Thyroid gland (tissue), 4 donors: ENCODE measurements at regions of chr9 and their contacts with region 1.

Region 1: DNA sequence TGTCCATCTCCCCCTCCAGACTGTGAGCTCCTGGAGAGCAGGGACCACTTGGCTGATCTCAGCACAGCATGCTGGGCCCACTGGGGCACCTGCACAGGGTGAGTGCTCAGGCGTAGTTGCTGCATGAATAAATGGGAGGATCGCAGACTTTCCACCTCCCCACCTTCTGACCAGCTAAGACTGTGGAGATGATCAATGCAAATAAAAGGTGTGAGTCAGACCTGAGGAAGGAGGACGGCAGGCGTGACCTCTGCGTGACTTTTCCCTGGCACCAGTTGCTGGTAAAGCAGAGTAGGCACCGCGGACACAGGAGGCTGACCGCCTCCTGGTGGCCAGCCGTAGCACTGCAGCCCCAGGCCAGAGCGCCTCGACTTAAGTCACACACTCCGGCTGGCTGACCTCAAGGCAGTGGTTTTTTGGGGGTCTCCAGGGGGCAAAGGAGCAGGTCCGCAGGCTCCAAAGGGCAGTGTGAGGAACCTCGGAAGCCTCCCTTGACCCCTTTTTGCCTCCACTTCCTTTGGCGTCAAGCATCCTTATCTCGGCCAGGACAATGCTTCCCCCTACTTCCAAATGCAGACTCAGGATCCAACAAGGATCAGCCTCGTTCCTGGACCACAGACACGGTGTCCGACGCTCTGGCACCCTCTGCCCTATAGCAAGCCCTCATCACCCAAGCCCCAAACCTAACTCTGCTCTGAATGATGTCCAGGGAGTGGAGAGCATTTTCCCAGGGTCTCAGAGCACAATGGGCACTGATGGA is 12.7 kb upstream of the TDRD7 start:
- DNase-seq: peak; percentile 83 to 88
- H3K4me3 ChIP-seq: no peak overlapping the region
- H3K27ac ChIP-seq: no peak overlapping the region
- H3K4me1 ChIP-seq: no peaks in the 10 kb centered on the region
- H3K27me3 ChIP-seq: no peaks in the 10 kb centered on the region
- CTCF ChIP-seq: peak; percentile 92 to 98 (median 95)
- POLR2A ChIP-seq: no peak

Region 2: GRCh38 chr9:96856363-96857286 is 542.6 kb before region 1 on chr9:
- intact Hi-C with region 1: loop called (anchors 5 kb)
- DNase-seq: peak; percentile 59 to 71
- H3K4me3 ChIP-seq: no peak overlapping the region
- H3K27ac ChIP-seq: peak overlapping the region in 1 of 3 donors; percentile 6
- H3K4me1 ChIP-seq: peaks cover 21 to 34% of the 10 kb centered on the region in 2 donors
- H3K27me3 ChIP-seq: no peaks in the 10 kb centered on the region
- CTCF ChIP-seq: peak; percentile 58 to 93 (median 85)
- POLR2A ChIP-seq: no peak

Region 3: GRCh38 chr9:97880336-97880735 is 481.2 kb after region 1 on chr9:
- intact Hi-C with region 1: no loop called
- DNase-seq: peak; percentile 70
- H3K4me3 ChIP-seq: no peak overlapping the region
- H3K27ac ChIP-seq: peak overlapping the region in 2 of 3 donors; percentile 28 to 49
- H3K4me1 ChIP-seq: peaks cover 20 to 25% of the 10 kb centered on the region in 2 donors
- H3K27me3 ChIP-seq: no peaks in the 10 kb centered on the region
- CTCF ChIP-seq: no peak
- POLR2A ChIP-seq: no peak